Psoas muscle (tissue), 8 donors: ENCODE measurements at regions of chr9 and their contacts with region 1.

Region 1: DNA sequence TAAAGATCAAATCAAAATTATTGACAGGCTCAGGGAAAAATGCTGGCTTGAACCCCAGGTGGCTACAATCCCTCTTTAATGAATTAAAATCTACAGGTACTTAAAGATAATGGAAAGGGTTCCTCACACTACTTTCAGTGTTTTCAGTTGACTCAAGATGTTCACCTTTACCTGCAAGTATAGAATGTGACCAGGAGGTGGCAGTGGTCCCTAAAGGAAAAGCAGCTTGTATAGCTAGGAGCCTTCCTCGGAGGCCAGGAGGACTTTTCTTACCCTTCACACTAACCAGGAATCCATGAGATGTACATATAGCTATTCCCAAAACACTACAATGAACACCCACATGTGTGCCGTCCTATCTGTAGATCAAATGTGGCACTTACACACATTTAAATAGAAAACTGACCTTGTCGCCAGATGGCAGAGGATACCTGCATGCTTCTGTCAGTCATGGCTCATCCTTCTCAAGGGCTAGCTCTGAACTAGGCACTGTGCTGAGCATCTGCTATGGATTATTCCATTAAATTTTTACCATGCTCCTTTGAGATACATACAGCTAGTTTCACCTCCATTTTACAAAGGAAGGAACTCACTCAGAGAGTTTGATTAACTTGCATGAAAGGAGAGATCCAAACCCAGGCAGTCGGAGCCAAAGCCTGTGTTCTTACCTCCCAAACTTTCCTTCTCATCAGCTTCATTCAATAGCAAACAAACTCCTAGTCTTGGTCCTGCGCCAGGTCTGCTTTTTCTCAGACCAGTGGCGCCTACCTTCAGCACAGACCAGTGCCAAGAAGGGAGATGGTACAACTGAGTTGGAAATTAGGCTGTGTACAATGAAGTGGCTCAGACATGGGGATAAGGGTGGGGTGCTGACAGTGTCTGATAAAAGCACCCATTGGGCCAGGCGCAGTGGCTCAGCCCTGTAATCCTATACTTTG is 24.5 kb downstream of the C9orf152 start:
- DNase-seq: no peak
- ATAC-seq: peak in 3 of 4 donors; percentile 65 to 73 (median 68)
- H3K4me3 ChIP-seq: no peak overlapping the region
- H3K27ac ChIP-seq: no peak overlapping the region
- H3K4me1 ChIP-seq: no peaks in the 10 kb centered on the region
- H3K27me3 ChIP-seq: no peaks in the 10 kb centered on the region
- CTCF ChIP-seq: peak; percentile 58

Region 2: GRCh38 chr9:110217656-110218099 is 34.2 kb after region 1 on chr9:
- intact Hi-C with region 1: loop called in 1 of 2 experiments (anchors 2 kb)
- DNase-seq: no peak
- ATAC-seq: no peak
- H3K4me3 ChIP-seq: no peak overlapping the region
- H3K27ac ChIP-seq: no peak overlapping the region
- H3K4me1 ChIP-seq: no peaks in the 10 kb centered on the region
- H3K27me3 ChIP-seq: no peaks in the 10 kb centered on the region
- CTCF ChIP-seq: peak; percentile 74

Region 3: DNA sequence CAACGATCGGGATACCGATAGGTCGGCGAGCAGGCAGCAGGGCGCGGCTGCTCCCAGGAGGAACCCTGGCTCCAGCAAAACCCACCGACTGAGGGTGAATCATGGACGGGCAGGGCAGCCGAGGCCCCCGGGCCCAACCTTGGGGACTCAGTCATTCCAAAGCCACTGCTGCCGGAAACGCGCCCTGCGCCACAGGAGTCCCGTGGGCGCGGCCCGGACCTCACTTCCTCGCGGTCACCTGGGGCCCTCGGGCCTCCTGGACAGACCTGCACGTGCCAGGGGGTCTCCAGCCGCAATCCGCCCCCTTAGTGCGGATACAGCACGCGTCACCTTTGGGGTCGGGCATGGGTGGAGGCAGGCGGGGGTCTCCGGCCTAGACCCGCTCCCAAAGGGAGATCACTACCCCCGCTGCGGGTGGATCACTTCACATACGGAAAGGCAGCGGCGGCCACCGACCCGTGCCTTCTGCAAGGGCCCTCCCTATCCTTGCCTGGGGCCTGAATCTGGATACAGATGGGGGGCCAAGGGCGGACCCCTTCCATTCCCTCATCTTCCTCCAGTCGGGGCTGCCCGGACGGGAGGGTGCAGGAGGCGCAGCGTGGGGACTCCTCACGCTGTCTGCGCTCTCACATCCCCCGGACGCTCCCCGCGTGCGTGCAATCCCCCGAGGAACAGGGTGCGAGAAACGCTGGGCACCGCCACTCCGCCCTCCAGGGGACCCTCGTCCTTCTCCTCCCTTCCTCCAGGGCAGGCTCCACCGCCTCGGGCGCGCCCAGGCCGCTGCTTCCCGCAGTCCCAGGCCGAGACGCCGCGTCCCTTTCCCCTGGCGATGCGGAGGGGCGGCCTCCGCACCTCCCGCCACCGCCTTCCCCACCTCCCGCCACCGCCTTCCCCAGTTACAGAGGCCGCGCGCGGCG is 72.2 kb after region 1 on chr9:
- intact Hi-C with region 1: no loop called
- DNase-seq: peak; percentile 70 to 74
- ATAC-seq: peak; percentile 40 to 65 (median 61)
- H3K4me3 ChIP-seq: peak overlapping the region; percentile 90
- H3K27ac ChIP-seq: peak overlapping the region; percentile 86
- H3K4me1 ChIP-seq: peaks cover 19% of the 10 kb centered on the region
- H3K27me3 ChIP-seq: no peaks in the 10 kb centered on the region
- CTCF ChIP-seq: no peak

Region 4: GRCh38 chr9:110623462-110624025 is 440.1 kb after region 1 on chr9:
- intact Hi-C with region 1: loop called (anchors 5 kb)
- DNase-seq: no peak
- ATAC-seq: peak in 2 of 4 donors; percentile 42 to 58
- H3K4me3 ChIP-seq: no peak overlapping the region
- H3K27ac ChIP-seq: no peak overlapping the region
- H3K4me1 ChIP-seq: no peaks in the 10 kb centered on the region
- H3K27me3 ChIP-seq: no peaks in the 10 kb centered on the region
- CTCF ChIP-seq: peak; percentile 65